ENCODE measurements at regions of chr2 and their contacts with region 1.

Region 1: GRCh38 chr2:100984892-100985379 is 17.2 kb upstream of the RPL31 start:
- H3K4me3 Mint-ChIP-seq: no peak overlapping the region
- H3K27ac Mint-ChIP-seq: no peak overlapping the region
- H3K4me1 Mint-ChIP-seq: no peaks in the 10 kb centered on the region
- H3K27me3 Mint-ChIP-seq: peaks cover 5% of the 10 kb centered on the region

Region 2: DNA sequence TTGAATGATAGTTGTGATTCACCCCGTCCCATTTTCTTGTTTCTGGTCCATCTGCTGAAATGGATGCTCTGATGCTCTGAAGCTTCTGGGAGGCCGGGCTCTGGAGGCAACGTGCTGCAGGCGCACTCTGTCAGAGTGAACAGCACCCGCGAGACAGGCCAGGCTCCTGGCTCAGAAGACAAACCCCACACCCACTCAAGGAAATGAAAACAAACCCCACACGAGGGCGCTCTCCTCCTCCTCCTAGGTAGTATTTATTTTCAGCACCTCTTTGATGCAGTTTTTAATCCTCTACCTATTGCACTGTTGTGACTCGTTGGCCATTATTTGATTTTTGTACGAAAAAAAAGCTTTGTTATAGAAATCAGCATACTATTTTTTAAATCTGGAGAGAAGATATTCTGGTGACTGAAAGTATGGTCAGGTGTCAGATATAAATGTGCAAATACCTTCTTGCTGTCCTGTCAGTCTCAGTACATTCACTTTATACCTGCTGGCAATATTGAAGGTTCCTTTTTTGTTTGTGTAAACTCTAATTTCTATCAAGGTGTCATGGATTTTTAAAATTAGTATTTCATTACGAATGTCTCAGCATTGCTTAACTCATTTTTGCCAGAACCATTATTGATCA is 557.2 kb before region 1 on chr2:
- intact Hi-C with region 1: loop called (anchors 10 kb)
- H3K4me3 Mint-ChIP-seq: no peak overlapping the region
- H3K27ac Mint-ChIP-seq: no peak overlapping the region
- H3K4me1 Mint-ChIP-seq: peaks cover 32% of the 10 kb centered on the region
- H3K27me3 Mint-ChIP-seq: peaks cover 5% of the 10 kb centered on the region

Region 3: DNA sequence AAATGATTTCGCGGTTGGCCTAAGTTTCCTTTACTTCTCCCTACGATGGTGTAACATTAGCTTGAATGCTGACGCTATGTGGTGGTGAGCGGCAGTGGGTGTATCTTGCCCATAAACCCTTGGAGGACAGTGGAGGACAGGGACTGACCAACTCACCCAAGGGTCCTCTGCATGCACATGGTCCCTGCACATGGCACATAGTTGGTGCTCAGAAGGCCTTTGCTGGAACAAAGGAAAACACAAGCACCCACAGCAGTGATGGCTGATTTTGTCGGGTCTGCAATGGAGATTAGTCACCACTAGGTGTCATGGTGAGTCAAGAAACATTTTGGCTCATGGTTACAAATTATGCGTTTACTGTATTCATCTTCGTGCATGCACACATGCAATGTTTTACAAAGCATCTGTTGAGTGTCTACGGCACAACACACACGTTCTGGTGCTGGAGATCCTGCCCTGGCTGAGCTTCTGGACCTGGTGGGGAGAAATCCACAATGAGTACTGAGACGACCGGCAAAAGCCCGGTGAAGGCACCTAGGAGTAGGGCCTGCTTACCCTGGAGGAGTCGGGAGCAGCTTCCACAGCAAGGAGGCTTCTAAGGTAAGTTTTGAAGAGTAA is 378.1 kb before region 1 on chr2:
- intact Hi-C with region 1: loop called (anchors 1 kb)
- H3K4me3 Mint-ChIP-seq: peak overlapping the region; percentile 17
- H3K27ac Mint-ChIP-seq: no peak overlapping the region
- H3K4me1 Mint-ChIP-seq: no peaks in the 10 kb centered on the region
- H3K27me3 Mint-ChIP-seq: peaks cover 6% of the 10 kb centered on the region

Region 4: DNA sequence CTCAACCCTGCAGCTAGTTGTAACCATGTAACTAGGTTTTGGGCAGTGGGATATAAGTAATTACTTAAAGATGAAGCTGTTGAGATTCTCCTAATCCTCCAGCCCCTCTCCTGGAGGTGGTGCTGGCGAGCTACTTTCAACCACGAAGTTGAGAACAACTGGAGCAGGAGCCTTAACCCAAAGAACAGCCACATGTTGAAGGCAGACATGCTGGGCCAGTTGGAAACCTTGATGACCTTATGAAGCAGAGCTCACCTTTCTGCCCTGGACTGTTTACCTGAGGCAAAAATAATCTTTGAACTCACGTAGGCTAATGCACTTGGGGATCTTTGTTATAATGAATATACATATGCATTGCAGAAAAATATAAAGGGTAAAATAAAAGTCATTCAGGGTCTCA is 254.6 kb before region 1 on chr2:
- intact Hi-C with region 1: loop called (anchors 1 kb)
- H3K4me3 Mint-ChIP-seq: no peak overlapping the region
- H3K27ac Mint-ChIP-seq: no peak overlapping the region
- H3K4me1 Mint-ChIP-seq: no peaks in the 10 kb centered on the region
- H3K27me3 Mint-ChIP-seq: peaks cover 11% of the 10 kb centered on the region

Region 5: GRCh38 chr2:100968146-100969145 is 16.5 kb before region 1 on chr2:
- intact Hi-C with region 1: no loop called
- H3K4me3 Mint-ChIP-seq: no peak overlapping the region
- H3K27ac Mint-ChIP-seq: no peak overlapping the region
- H3K4me1 Mint-ChIP-seq: no peaks in the 10 kb centered on the region
- H3K27me3 Mint-ChIP-seq: peaks cover 8% of the 10 kb centered on the region